Activated CD4-positive, alpha-beta T cell treated with anti-CD3 and anti-CD28 coated beads, Interleukin-2, amount 10 ng/mL, durations not matched to agents 7 days and 5 days (primary cell): ENCODE measurements at regions of chr2 and their contacts with region 1.

Region 1: GRCh38 chr2:70086278-70086837 is 919 bp upstream of the PCBP1 start:
- DNase-seq: peak; percentile 84
- H3K4me3 Mint-ChIP-seq: peak overlapping the region; percentile 98
- H3K27ac Mint-ChIP-seq: peak overlapping the region; percentile 100
- H3K4me1 Mint-ChIP-seq: peaks cover 51% of the 10 kb centered on the region
- H3K27me3 Mint-ChIP-seq: no peaks in the 10 kb centered on the region

Region 2: GRCh38 chr2:70070541-70071268 is 15.7 kb before region 1 on chr2:
- CTCF ChIA-PET with region 1: interaction called, 15 read pairs
- POLR2A ChIA-PET with region 1: no interaction called
- DNase-seq: peak; percentile 75
- H3K4me3 Mint-ChIP-seq: peak overlapping the region; percentile 47
- H3K27ac Mint-ChIP-seq: peak overlapping the region; percentile 93
- H3K4me1 Mint-ChIP-seq: peaks cover 49% of the 10 kb centered on the region
- H3K27me3 Mint-ChIP-seq: no peaks in the 10 kb centered on the region

Region 3: DNA sequence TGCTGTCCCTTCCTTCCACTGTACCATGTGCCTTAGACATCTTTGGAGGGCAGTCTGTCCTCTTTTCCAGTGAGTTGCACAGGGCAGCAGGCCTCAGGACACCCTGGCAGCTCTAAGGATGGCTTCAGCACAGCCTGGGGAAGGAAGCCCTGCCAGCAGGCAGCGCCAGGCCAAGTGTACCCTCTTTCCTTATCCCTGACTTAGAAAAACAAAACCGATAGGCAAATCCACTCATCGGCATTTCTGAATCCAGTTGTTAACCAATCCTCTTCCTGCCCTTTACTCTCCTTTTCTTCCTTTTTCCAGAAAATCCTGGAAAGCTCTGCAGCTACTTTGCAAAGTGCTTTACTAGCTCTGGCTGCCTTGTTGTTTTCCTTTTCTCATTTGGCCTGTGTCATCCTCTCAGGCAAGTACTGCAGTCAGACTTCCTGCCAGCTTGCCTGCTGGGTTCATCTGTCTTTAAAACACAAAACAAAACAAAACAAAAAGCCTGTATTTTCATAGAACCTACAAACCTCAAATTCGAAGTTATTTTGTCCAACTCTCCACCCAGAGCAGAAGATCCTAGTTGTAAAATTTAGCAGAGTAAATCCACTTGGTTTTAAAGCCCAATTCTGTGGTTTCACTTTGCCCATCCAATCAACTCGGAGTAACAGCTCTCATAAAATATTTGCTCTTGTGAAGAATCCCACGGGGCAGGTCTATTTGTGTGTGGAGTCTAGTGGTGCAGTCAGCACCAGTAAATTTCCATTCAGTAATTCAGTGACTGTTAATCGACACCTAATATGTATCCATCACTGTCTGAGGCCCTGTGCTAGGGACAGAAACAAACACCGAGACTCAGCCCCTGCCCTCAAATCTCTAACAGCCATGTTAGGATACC is 46.1 kb after region 1 on chr2:
- CTCF ChIA-PET with region 1: interaction called, 31 read pairs
- POLR2A ChIA-PET with region 1: interaction called, 10 read pairs
- DNase-seq: peak; percentile 62
- H3K4me3 Mint-ChIP-seq: peak overlapping the region; percentile 79
- H3K27ac Mint-ChIP-seq: peak overlapping the region; percentile 97
- H3K4me1 Mint-ChIP-seq: peaks cover 77% of the 10 kb centered on the region
- H3K27me3 Mint-ChIP-seq: no peaks in the 10 kb centered on the region